ENCODE measurements at regions of chr7 and their contacts with region 1.

Region 1: DNA sequence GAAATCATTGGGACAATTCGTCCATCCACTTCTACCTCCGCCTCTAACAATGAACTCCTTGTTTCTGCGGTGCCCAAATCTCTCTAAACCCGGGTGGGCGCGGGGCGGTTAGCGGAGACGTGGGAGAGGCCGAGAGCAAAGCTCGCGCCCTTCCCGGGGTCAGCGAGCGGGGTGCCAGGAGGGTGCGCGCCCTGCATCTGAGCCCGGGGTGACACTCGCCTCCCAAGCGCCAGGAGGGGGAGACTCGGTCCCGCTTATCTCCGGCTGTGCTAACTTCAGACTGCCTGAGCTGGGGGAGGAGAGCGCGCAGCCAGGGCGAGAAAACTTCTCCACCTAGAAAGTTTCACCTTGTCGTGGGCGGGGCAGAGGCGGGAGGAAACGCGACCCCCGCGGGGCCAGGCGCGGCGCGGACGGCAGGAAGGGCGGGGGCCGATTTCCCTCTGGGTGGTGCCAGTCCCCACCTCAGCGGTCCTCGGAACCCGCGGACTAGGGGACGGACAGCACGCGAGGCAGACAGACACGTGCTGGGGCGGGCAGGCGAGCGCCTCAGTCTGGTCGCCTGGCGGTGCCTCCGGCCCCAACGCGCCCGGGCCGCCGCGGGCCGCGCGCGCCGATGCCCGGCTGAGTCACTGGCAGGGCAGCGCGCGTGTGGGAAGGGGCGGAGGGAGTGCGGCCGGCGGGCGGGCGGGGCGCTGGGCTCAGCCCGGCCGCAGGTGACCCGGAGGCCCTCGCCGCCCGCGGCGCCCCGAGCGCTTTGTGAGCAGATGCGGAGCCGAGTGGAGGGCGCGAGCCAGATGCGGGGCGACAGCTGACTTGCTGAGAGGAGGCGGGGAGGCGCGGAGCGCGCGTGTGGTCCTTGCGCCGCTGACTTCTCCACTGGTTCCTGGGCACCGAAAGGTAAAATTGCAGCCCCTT is at the start of gene MET:
- DNase-seq: peak; percentile 74 to 85 (median 81)
- ATAC-seq: peak; percentile 80 to 95 (median 92)
- H3K4me3 ChIP-seq: peak within 1 kb of the TSS; percentile 40 to 77 (median 62)
- H3K27ac ChIP-seq: peak within 1 kb of the TSS; percentile 54 to 87 (median 82)
- H3K4me1 ChIP-seq: peaks cover 0 to 36% (median 8%) of the 10 kb centered on the region in 12 donors
- H3K27me3 ChIP-seq: peaks cover 0 to 22% (median 0%) of the 10 kb centered on the region in 9 donors
- CTCF ChIP-seq: peak; percentile 32 to 67 (median 52)
- POLR2A ChIP-seq: peak in 1 of 2 donors; percentile 27
- total RNA-seq, gene MET: 11.1 to 29.7 (median 16.4) TPM

Region 2: DNA sequence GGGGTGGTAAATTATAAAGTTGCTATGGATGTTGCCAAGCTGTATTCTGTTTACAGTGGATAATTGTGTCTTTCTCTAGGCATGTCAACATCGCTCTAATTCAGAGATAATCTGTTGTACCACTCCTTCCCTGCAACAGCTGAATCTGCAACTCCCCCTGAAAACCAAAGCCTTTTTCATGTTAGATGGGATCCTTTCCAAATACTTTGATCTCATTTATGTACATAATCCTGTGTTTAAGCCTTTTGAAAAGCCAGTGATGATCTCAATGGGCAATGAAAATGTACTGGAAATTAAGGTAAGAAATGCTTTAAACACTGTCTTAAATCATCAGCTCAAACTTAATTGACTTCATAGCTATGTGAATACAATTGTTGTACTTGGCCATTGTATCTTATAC is 91.0 kb after region 1 on chr7:
- intact Hi-C with region 1: no loop called
- DNase-seq: no peak
- ATAC-seq: no peak
- H3K4me3 ChIP-seq: no peak overlapping the region
- H3K27ac ChIP-seq: no peak overlapping the region
- H3K4me1 ChIP-seq: no peaks in the 10 kb centered on the region
- H3K27me3 ChIP-seq: no peaks in the 10 kb centered on the region
- CTCF ChIP-seq: no peak
- POLR2A ChIP-seq: no peak

Region 3: DNA sequence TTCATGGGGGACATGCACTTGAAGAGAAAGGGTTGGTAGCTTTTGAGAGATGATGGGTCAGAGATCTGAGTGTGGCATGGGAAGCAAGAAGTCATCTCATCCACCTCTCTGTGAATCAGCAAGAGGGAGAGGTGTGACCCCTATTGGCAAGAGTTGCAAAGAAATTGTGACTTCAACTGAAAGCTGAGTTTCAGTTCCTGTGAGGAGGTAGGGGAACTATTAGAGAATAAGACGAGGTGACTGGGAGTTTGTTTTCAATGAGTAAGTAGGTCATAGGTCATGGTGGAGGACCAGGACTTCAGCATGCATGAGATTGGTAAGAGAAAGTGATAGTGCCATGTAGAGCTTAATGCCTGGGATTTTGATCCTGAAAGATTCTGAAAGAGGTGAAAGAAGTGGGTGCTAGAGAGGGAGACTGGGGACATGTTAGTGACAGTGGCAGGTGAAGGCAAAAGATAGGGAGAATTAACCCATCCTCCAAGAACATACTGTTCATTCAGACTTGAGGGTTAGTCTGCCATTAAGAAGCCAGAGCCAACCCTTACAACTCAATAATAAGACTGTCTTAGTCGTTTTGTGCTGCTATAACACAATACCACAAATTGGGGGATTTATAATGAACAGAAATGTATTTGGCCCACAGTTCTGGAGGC is 115.0 kb after region 1 on chr7:
- intact Hi-C with region 1: loop called in 4 of 10 experiments (anchors 5 kb)
- DNase-seq: no peak
- ATAC-seq: peak in 1 of 4 donors; percentile 32
- H3K4me3 ChIP-seq: no peak overlapping the region
- H3K27ac ChIP-seq: no peak overlapping the region
- H3K4me1 ChIP-seq: peaks cover 0 to 5% (median 0%) of the 10 kb centered on the region in 12 donors
- H3K27me3 ChIP-seq: no peaks in the 10 kb centered on the region
- CTCF ChIP-seq: peak; percentile 20 to 54 (median 32)
- POLR2A ChIP-seq: no peak

Region 4: DNA sequence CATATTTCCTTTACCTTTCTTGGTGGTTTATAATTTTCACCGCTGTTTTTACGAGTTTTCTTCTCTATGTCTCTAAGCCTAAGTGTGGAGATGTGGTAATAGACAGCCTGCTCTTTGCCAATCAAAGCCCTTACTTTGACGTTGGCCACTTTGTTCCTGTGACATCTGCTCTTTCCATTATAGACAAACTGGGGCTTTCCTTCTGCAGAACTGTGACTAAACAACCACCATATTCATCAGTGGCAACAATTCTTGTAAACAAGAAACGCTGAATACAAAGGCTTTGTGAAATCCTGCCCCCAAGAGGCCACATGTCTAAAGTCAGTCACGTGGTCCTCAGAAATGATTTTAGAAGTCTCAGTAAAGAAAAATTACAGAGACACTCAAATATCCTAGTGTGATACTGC is 130.8 kb after region 1 on chr7:
- intact Hi-C with region 1: loop called in 7 of 10 experiments (anchors 5 kb)
- DNase-seq: no peak
- ATAC-seq: peak in 1 of 4 donors; percentile 22
- H3K4me3 ChIP-seq: no peak overlapping the region
- H3K27ac ChIP-seq: no peak overlapping the region
- H3K4me1 ChIP-seq: peaks cover 0 to 15% (median 5%) of the 10 kb centered on the region in 12 donors
- H3K27me3 ChIP-seq: no peaks in the 10 kb centered on the region
- CTCF ChIP-seq: peak in 10 of 12 donors; percentile 11 to 59 (median 38)
- POLR2A ChIP-seq: no peak

Region 5: GRCh38 chr7:116809636-116810266 is 137.8 kb after region 1 on chr7:
- intact Hi-C with region 1: loop called in 9 of 10 experiments (anchors 2 to 5 kb)
- DNase-seq: peak in 1 of 5 donors; percentile 36
- ATAC-seq: peak; percentile 68 to 80 (median 74)
- H3K4me3 ChIP-seq: no peak overlapping the region
- H3K27ac ChIP-seq: no peak overlapping the region
- H3K4me1 ChIP-seq: peaks cover 0 to 5% (median 0%) of the 10 kb centered on the region in 12 donors
- H3K27me3 ChIP-seq: no peaks in the 10 kb centered on the region
- CTCF ChIP-seq: peak; percentile 52 to 82 (median 66)
- POLR2A ChIP-seq: no peak